Panc1 (cell line): ENCODE measurements at regions of chr9 and their contacts with region 1.

Region 1: GRCh38 chr9:80976403-80976802 is 712.9 kb downstream of the TLE1 start:
- DNase-seq: no peak
- ATAC-seq: no peak
- H3K4me3 ChIP-seq: no peak overlapping the region
- H3K27ac ChIP-seq: no peak overlapping the region
- H3K4me1 ChIP-seq: no peaks in the 10 kb centered on the region
- H3K27me3 ChIP-seq: no peaks in the 10 kb centered on the region
- CTCF ChIP-seq: no peak

Region 2: GRCh38 chr9:80878556-80878955 is 97.8 kb before region 1 on chr9:
- CTCF ChIA-PET with region 1: no interaction called
- POLR2A ChIA-PET with region 1: no interaction called
- in situ Hi-C with region 1: no loop called
- intact Hi-C with region 1: loop called (anchors 5 kb)
- DNase-seq: no peak
- ATAC-seq: no peak
- H3K4me3 ChIP-seq: no peak overlapping the region
- H3K27ac ChIP-seq: no peak overlapping the region
- H3K4me1 ChIP-seq: no peaks in the 10 kb centered on the region
- H3K27me3 ChIP-seq: no peaks in the 10 kb centered on the region
- CTCF ChIP-seq: no peak